ENCODE measurements at regions of chr6 and their contacts with region 1.

Region 1: DNA sequence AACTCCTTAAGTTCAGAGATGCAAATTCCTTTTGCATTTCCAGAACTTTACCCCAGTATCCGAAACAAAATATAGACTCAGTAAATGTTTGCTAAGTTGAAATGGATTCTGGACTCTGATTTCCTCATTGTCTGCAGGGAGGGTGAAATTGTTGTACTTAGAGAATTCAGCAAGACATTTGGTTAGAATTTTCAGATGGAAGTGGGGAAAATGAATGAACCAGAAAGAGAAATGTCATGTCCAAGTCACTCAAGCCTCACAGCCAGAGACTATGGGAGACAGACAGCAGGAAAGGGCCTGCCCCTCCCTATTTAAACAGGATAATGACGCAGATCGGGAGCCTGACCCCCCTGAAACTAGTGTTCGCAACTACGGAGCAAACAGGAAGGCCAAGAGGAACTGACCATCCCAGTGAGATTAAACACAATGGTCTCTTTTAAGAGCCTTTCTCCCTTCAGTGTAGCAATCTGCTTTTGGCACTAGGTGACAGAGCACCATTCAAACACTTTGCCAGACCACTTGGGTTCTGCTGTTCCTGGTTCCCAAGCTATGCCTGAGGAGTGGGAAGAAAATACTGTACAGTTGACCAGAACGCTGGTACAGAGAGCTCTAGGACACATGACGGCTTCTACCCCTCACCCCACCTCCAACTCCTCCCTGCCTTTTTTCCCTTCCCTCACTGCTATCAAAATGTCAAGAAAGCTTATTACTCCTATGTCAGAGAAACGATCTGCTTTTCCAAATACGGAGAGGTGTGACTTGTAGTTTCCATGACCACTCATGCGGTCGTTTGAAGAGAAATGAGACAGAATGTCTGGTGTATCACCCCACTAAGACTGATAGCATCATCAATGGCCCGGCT is 13.7 kb downstream of the NEDD9 start:
- DNase-seq: peak; percentile 71
- H3K4me3 Mint-ChIP-seq: peak overlapping the region; percentile 65
- H3K27ac Mint-ChIP-seq: peak overlapping the region; percentile 99
- H3K4me1 Mint-ChIP-seq: peaks cover 66% of the 10 kb centered on the region
- H3K27me3 Mint-ChIP-seq: no peaks in the 10 kb centered on the region
- CTCF ChIP-seq: no peak

Region 2: DNA sequence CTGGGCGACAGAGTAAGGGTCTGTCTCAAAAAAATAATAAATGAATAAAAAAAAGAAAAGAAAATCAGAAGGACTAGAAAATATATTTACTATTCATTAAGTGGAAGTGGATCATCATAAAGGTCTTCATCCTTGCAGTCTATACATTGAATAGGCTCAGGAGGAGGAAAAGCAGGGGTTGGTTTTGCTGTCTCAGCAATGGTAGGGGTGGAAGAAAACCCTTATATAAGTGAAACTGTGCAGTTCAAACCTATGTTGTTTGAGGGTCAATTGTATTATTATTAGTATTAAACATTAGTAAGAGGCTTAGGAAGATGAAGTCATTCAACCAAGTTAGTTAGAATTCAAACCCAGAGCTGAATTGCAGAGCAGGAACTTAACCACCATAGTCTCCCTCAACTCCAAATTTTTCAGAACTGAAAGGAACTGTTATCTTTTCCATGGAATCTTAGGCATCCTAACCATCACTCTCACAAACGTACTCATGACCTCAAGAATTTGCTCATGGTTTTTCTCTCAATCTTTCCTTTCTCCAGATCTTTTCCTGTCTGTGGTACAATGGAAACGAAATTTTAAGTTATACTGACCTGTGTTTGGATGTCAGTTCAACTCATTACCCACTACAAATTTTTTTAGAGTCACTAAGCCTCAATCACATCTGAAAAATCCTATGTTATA is 132.9 kb before region 1 on chr6:
- CTCF ChIA-PET with region 1: no interaction called
- intact Hi-C with region 1: no loop called
- DNase-seq: no peak
- H3K4me3 Mint-ChIP-seq: no peak overlapping the region
- H3K27ac Mint-ChIP-seq: no peak overlapping the region
- H3K4me1 Mint-ChIP-seq: peaks cover 10% of the 10 kb centered on the region
- H3K27me3 Mint-ChIP-seq: no peaks in the 10 kb centered on the region
- CTCF ChIP-seq: no peak

Region 3: GRCh38 chr6:11144393-11144851 is 74.3 kb before region 1 on chr6:
- CTCF ChIA-PET with region 1: interaction called, 3 read pairs
- intact Hi-C with region 1: loop called (anchors 5 kb)
- DNase-seq: peak; percentile 79
- H3K4me3 Mint-ChIP-seq: no peak overlapping the region
- H3K27ac Mint-ChIP-seq: peak overlapping the region; percentile 95
- H3K4me1 Mint-ChIP-seq: peaks cover 34% of the 10 kb centered on the region
- H3K27me3 Mint-ChIP-seq: no peaks in the 10 kb centered on the region
- CTCF ChIP-seq: peak; percentile 64

Region 4: DNA sequence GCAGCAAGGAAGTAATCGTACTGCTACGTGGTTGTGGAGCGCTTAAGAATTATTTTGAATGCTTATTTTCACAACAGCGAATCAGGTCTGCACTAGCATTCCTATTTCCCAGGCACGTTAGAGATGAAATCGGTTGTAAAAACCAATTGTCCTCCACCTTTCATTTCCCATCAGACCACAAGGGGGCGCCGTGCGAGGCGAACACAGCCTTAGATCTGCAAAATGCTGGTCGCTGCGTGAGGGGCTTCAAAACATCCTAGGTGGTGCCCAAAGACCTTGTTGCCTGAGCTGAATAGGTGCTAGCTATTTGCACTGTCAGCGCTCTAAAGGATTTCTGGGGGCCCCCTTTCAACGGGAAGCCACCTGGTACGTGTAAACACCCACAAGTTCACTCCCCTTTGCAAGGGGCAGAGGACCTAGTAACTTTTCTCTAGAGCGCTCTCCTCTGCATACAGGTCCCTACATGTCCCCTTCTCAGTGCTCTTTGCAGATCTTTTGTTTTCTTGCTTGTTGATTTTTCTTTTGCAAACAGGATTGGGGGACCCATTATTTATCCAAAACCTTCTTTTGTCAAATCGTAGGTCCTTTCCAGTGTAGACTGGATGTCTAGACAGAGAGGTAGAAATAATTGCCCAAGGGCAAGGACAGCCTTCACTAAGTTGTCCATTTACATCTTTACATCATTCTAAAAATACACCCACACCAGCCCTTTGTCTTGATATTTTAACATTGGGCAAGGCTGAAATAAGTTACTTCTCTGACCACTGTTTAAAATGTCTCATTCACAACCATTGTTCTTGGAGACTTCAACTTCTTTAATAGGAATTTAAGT is 46.1 kb before region 1 on chr6:
- CTCF ChIA-PET with region 1: no interaction called
- intact Hi-C with region 1: loop called (anchors 5 kb)
- DNase-seq: peak; percentile 68
- H3K4me3 Mint-ChIP-seq: no peak overlapping the region
- H3K27ac Mint-ChIP-seq: no peak overlapping the region
- H3K4me1 Mint-ChIP-seq: peaks cover 26% of the 10 kb centered on the region
- H3K27me3 Mint-ChIP-seq: no peaks in the 10 kb centered on the region
- CTCF ChIP-seq: peak; percentile 66

Region 5: GRCh38 chr6:11207199-11207968 is 11.4 kb before region 1 on chr6:
- CTCF ChIA-PET with region 1: interaction called, 5 read pairs
- intact Hi-C with region 1: loop called (anchors 1 kb)
- DNase-seq: peak; percentile 79
- H3K4me3 Mint-ChIP-seq: peak overlapping the region; percentile 41
- H3K27ac Mint-ChIP-seq: peak overlapping the region; percentile 99
- H3K4me1 Mint-ChIP-seq: peaks cover 39% of the 10 kb centered on the region
- H3K27me3 Mint-ChIP-seq: no peaks in the 10 kb centered on the region
- CTCF ChIP-seq: no peak

Region 6: DNA sequence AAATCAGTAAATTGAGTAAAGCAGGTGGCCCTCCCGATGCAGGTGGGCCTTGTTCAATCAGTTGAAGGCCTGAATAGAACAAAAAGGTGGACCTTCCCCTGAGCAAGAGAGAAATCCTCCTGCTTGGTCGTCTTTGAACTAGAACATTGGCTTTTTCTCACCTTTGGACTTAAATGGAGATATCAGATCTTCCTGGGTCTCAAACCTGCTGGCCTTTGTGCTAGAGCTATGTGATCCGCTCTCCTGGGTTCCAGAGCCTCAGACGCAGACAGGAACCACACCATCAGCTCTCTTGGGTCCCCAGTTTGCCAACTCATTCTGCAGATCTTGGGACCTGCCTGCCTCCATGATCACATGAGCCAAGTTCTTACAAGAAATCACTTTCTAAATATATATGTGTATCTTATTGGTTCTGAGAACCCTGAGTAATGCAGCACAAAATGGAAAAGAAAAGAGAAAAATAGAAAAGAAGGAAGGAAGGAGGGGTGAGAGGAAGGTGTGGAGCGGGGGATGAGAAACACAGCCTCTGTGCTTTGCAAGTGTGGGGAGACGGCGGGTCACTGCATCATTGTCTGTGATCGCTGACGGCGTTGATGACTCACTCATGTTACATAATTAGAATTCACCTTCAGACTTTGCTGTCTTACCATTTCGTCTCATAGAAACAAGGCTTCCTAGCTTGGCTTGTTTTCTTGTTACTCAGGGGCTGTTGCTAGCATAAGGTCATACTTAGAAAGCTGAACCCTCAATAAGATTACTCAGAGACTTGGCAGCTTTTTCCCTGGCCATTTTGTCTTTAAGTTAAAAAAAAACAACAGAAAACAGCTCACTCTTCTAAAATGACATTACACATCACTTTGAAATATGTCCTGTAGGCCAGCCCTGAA is 99.4 kb after region 1 on chr6:
- CTCF ChIA-PET with region 1: no interaction called
- intact Hi-C with region 1: loop called (anchors 5 kb)
- DNase-seq: peak; percentile 73
- H3K4me3 Mint-ChIP-seq: no peak overlapping the region
- H3K27ac Mint-ChIP-seq: peak overlapping the region; percentile 98
- H3K4me1 Mint-ChIP-seq: peaks cover 53% of the 10 kb centered on the region
- H3K27me3 Mint-ChIP-seq: no peaks in the 10 kb centered on the region
- CTCF ChIP-seq: no peak

Region 7: DNA sequence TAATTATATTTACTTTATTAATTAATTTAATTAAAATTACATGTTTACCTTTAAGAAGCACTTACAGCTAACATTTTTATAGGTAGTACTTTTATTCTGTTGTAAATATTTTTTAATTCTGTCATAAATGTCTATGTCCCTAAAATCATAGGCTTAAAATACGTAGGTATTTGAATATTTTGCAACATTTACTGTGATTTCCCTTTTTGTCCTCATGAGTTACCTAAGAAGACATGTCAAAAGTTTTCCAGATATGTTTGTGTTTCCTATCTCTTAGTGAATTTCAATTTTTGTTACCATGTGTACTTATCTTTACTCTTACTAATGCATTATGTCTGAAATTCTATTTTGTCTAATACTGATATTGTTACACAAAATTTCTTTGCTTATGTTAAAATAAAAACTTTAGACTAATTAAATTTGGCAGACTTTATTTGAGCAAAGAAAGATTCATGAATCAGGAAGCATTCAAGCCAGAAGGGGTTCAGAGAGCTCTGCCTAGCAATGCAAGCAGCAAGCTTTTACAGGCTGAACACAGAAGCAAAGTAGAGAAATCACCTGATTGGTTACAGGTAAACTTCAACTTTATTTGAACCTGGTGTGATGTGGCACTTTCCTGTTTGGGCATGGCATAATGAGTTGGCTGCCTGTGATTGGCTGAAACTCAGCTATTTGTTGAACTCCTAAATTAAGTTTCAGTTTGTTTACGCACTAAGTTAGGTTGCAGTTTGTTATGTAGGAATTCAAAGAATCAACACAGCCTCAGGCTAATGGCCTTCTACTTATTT is 195.6 kb after region 1 on chr6:
- CTCF ChIA-PET with region 1: interaction called, 3 read pairs
- intact Hi-C with region 1: loop called (anchors 5 kb)
- DNase-seq: peak; percentile 64
- H3K4me3 Mint-ChIP-seq: no peak overlapping the region
- H3K27ac Mint-ChIP-seq: peak overlapping the region; percentile 58
- H3K4me1 Mint-ChIP-seq: peaks cover 5% of the 10 kb centered on the region
- H3K27me3 Mint-ChIP-seq: no peaks in the 10 kb centered on the region
- CTCF ChIP-seq: no peak

Region 8: DNA sequence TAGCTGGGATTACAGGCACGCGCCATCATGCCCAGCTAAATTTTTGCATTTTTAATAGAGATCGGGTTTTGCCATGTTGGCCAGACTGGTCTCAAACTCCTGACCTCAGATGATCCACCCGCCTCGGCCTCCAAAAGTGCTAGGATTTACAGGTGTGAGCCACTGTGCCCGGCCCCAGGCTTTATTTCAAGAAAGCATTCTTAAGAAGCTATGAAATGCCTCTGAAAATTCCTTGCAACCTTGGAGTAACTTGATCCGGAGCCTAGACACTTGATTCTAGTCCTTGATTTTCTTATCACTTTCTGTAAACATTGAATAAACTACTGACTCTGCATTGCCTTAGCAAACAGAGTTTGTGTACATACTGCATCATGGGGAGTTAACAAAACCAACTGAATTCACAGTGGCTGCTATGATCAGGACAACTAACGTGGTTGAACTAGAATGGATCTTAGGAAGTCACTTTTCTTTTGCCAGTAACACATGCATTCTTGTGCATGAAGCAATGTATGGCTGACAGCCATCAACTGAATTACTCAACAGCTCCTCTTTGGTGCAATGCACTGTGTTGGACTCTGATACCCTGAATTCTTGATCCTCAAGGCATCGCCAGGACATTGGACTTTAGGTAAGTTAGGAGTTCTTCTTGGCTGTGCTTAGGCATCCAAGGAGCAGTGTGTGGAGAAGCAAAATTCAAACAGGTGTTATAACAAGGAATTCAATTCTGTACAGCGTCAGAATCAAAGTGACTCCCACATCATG is 216.0 kb after region 1 on chr6:
- CTCF ChIA-PET with region 1: no interaction called
- intact Hi-C with region 1: loop called (anchors 5 kb)
- DNase-seq: peak; percentile 37
- H3K4me3 Mint-ChIP-seq: peak overlapping the region; percentile 41
- H3K27ac Mint-ChIP-seq: peak overlapping the region; percentile 77
- H3K4me1 Mint-ChIP-seq: peaks cover 26% of the 10 kb centered on the region
- H3K27me3 Mint-ChIP-seq: no peaks in the 10 kb centered on the region
- CTCF ChIP-seq: no peak

Region 9: GRCh38 chr6:11445146-11445545 is 226.4 kb after region 1 on chr6:
- CTCF ChIA-PET with region 1: no interaction called
- intact Hi-C with region 1: no loop called
- DNase-seq: no peak
- H3K4me3 Mint-ChIP-seq: no peak overlapping the region
- H3K27ac Mint-ChIP-seq: no peak overlapping the region
- H3K4me1 Mint-ChIP-seq: no peaks in the 10 kb centered on the region
- H3K27me3 Mint-ChIP-seq: no peaks in the 10 kb centered on the region
- CTCF ChIP-seq: no peak